OCI-LY7 (cell line): ENCODE measurements at regions of chr20 and their contacts with region 1.

Region 1: GRCh38 chr20:14984768-14985622 is 647.6 kb upstream of the FLRT3 start:
- DNase-seq: no peak
- H3K4me3 ChIP-seq: no peak overlapping the region
- H3K27ac ChIP-seq: no peak overlapping the region
- H3K4me1 ChIP-seq: no peaks in the 10 kb centered on the region
- CTCF ChIP-seq: no peak

Region 2: DNA sequence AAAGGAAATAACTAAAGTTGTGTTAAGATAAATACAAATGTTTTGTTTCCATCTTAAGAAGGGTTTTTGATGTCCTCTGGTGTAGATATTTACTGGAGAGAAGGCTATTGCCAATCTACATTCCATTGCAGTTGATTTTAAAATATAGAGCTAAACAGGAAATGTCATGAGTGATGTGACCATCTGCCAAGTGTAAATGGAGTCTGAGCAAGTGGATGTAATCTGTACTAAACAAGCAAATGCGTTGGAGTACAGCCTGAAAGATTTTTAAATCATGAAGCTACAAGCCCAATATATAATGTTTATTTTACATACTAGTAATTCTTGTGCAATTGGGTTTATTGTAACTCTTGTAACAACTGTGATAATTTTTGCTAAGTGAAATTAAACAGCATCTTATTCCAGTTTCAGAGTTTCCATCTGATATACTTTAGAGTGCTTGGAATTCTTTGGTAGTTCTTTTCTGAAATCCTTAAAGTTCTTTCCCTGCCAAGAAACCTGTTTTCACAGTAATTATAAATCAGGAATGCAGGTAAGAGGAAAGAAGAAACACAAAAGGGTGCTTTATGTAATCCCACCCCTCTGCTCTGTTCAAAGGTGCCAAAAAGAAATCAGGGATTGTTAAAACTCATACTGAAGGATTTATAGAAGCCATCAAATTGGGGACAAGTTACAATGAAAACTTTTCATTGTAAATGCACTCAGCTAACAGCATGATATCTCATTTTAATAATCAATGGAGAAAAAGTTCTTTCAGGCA is 600.4 kb before region 1 on chr20:
- CTCF ChIA-PET with region 1: no interaction called
- POLR2A ChIA-PET with region 1: interaction called, 11 read pairs
- intact Hi-C with region 1: no loop called
- DNase-seq: no peak
- H3K4me3 ChIP-seq: no peak overlapping the region
- H3K27ac ChIP-seq: no peak overlapping the region
- H3K4me1 ChIP-seq: no peaks in the 10 kb centered on the region
- CTCF ChIP-seq: no peak

Region 3: DNA sequence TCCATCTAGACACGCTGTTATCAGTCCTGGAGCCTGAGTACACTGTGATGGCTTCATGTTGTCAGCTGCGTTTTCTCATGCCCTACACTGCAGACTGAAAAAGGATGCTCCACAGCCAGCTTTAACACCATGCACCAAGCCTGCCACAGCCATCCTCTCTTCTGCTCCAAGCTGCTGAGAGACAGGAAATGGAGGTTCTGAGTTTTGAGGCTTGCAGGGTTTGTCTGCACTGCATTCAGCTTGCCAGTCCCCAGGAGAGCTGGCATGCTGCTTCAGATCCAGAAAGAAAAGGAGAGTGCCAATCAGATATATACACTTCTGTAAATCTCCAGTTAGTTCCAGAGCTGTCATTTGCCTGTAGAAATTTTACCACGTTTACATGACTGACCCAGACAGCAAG is 96.9 kb before region 1 on chr20:
- CTCF ChIA-PET with region 1: no interaction called
- POLR2A ChIA-PET with region 1: no interaction called
- intact Hi-C with region 1: no loop called
- DNase-seq: no peak
- H3K4me3 ChIP-seq: no peak overlapping the region
- H3K27ac ChIP-seq: no peak overlapping the region
- H3K4me1 ChIP-seq: no peaks in the 10 kb centered on the region
- CTCF ChIP-seq: no peak